GM10248 (cell line): ENCODE measurements at regions of chr2 and their contacts with region 1.

Region 1: DNA sequence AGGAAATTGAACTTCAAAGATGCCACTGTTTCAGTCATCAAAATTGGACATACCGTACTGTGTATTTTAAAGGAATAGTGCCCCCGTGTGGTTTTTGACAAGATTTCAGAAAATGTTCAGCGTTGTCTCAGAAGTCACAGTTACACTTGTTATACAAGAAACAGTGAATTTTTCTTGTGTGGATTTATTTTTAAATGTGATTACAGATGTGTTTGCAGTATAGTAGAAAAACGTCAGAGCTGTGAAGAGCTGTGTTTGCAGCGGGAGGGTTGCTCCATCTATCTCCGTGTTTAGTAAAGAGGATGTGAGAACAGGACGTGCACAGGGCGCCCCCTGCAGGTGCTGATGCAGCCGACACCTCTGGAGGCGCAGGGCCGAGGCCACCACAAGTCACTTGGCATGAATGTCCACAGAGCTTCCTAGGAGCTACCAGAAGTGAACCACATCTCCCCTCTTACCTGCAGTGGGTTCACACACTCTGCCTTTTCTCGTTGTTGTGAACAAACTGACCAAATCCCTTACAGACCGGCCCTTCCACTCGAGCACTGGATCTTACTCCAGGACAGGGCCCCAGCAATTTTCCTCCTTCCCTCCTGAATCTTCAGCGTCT is 73.1 kb downstream of the CACNB4 start:
- DNase-seq: peak; percentile 65
- CTCF ChIP-seq: peak; percentile 99

Region 2: GRCh38 chr2:151691631-151692030 is 334.2 kb before region 1 on chr2:
- CTCF ChIA-PET with region 1: interaction called, 10 read pairs
- POLR2A ChIA-PET with region 1: no interaction called
- DNase-seq: no peak
- CTCF ChIP-seq: peak; percentile 11

Region 3: DNA sequence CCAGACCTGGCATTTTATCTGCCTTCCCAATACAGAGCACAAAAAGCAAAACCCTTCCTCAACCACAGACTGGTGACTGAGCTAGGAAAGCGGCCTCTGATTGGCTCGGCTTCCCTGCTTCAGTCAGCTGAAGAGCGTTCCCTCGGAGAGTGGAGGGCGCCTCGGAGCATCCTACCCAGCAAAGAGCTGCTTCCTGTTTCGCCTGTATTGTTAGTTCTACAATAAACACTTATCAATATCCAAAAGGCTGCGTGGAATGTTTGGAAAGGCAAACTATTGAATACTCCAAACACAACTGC is 51.9 kb before region 1 on chr2:
- CTCF ChIA-PET with region 1: interaction called, 17 read pairs
- POLR2A ChIA-PET with region 1: no interaction called
- DNase-seq: no peak
- CTCF ChIP-seq: no peak

Region 4: DNA sequence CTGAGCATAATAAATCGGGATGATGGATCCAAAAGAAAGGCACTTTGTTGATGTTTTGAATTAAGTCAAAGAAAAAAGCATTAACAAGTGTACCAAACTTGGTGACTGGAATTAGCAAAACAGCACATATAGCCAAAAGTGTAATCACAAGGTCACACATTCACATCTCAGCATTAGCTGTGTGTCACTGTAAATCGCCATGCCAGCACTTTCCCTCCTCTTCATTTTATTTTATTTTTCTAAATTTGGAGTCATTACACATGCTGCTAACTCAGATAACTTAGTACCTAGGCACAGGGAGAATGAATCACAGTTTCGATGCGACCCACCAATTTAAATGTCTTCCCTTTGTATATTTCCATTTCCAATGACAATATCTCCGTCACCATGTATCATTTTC is 38.3 kb before region 1 on chr2:
- CTCF ChIA-PET with region 1: interaction called, 25 read pairs
- POLR2A ChIA-PET with region 1: no interaction called
- DNase-seq: no peak
- CTCF ChIP-seq: no peak

Region 5: DNA sequence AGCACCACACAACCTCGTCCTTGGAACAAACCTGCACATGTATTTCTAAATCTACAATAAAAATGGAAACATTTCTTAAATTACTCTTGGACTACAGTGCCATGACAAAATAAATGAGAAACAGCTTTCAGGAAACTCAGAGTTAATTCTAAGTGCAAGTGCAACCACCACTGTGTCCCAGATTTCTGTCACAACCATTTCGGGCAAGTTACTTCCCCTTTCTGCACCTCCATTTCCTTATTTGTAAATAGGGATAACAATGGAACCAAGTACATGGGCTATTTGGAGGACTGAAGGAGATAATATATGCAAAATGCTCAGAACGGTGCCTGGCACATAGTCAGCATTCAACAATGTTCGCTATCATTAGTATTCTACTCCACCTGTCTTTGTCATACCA is 20.2 kb before region 1 on chr2:
- CTCF ChIA-PET with region 1: interaction called, 105 read pairs
- POLR2A ChIA-PET with region 1: no interaction called
- DNase-seq: no peak
- CTCF ChIP-seq: no peak

Region 6: DNA sequence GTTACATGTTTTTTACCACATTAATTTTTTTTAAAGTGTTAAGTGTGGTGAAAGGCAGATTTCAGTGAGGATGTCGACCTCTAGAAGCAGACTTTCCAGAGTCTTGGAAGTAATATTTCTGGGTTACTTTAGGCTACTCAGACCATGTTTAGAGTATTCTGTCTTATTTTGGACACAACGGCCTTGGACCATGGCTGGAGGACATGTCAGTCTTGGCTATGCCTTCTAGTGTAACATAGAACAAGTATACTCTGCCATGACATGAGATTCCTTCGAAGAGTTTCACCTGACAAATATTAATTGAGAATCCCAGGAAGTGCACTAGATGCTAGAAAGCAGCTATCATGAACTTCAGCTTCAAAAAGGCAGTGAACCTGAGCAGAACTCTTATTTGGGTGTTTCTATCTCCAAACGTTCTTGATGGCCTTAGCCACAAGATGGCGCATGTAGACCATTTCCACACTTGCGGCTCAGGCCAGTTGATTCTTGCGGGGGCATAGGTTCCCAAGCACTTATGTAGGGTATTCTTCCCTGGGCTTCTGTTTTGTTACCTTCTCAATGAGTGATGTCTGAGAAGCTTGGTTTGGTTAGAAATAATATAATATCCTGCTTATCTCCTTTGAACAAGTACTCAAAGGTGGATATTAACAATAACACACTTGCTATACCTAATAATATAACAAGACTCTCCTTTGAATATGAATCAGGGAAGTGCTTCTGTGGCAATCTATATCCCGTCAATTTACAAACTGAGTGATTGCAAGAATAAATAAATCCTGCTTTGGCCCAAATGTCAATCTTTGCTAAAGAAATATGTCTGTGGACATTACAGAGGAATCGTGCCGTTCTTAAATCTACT is 11.1 kb after region 1 on chr2:
- CTCF ChIA-PET with region 1: interaction called, 31 read pairs
- POLR2A ChIA-PET with region 1: no interaction called
- DNase-seq: peak; percentile 74
- CTCF ChIP-seq: peak; percentile 81

Region 7: GRCh38 chr2:152175458-152176325 is 149.9 kb after region 1 on chr2 and contains the start of gene STAM2:
- CTCF ChIA-PET with region 1: interaction called, 11 read pairs
- POLR2A ChIA-PET with region 1: no interaction called
- DNase-seq: peak; percentile 94
- CTCF ChIP-seq: peak; percentile 97